PC-9 (cell line): ENCODE measurements at regions of chr9 and their contacts with region 1.

Region 1: DNA sequence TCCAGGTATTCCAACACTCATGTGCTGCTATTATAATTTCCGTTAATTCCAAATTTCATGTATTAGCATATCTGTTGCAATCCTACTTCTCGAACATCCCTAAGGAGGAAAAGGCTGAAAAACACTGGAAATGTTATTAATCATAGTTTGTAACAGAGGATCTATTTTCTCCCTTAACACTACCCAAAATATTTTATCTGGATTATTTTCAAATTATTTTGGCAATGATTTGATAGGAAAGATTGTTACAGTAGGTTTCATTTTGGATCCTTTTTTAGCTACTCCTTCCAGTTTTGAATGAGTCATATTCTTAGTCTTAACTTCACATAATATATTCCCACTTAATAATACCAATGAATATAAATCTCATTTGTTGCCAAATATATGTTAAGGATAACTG is 13.9 kb upstream of the NAA35 start:
- DNase-seq: no peak
- H3K4me3 ChIP-seq: no peak overlapping the region
- H3K27ac ChIP-seq: no peak overlapping the region
- H3K4me1 ChIP-seq: no peaks in the 10 kb centered on the region
- H3K27me3 ChIP-seq: no peaks in the 10 kb centered on the region
- CTCF ChIP-seq: no peak

Region 2: GRCh38 chr9:85964949-85965348 is 37.9 kb after region 1 on chr9:
- CTCF ChIA-PET with region 1: interaction called, 11 read pairs
- POLR2A ChIA-PET with region 1: no interaction called
- intact Hi-C with region 1: no loop called
- DNase-seq: no peak
- H3K4me3 ChIP-seq: no peak overlapping the region
- H3K27ac ChIP-seq: no peak overlapping the region
- H3K4me1 ChIP-seq: no peaks in the 10 kb centered on the region
- H3K27me3 ChIP-seq: no peaks in the 10 kb centered on the region
- CTCF ChIP-seq: no peak